ENCODE measurements at regions of chr13 and their contacts with region 1.

Region 1: GRCh38 chr13:48769107-48769704 is 115.5 kb downstream of the CYSLTR2 start:
- DNase-seq: peak; percentile 80
- H3K4me3 Mint-ChIP-seq: no peak overlapping the region
- H3K27ac Mint-ChIP-seq: peak overlapping the region; percentile 16
- H3K4me1 Mint-ChIP-seq: peaks cover 9% of the 10 kb centered on the region
- H3K27me3 Mint-ChIP-seq: no peaks in the 10 kb centered on the region
- CTCF ChIP-seq: peak; percentile 92

Region 2: GRCh38 chr13:48110931-48111721 is 658.1 kb before region 1 on chr13:
- CTCF ChIA-PET with region 1: no interaction called
- intact Hi-C with region 1: no loop called
- DNase-seq: peak; percentile 10
- H3K4me3 Mint-ChIP-seq: no peak overlapping the region
- H3K27ac Mint-ChIP-seq: no peak overlapping the region
- H3K4me1 Mint-ChIP-seq: peaks cover 31% of the 10 kb centered on the region
- H3K27me3 Mint-ChIP-seq: no peaks in the 10 kb centered on the region
- CTCF ChIP-seq: no peak

Region 3: GRCh38 chr13:48126944-48127830 is 642.0 kb before region 1 on chr13:
- CTCF ChIA-PET with region 1: no interaction called
- intact Hi-C with region 1: loop called (anchors 10 kb)
- DNase-seq: peak; percentile 20
- H3K4me3 Mint-ChIP-seq: no peak overlapping the region
- H3K27ac Mint-ChIP-seq: no peak overlapping the region
- H3K4me1 Mint-ChIP-seq: peaks cover 8% of the 10 kb centered on the region
- H3K27me3 Mint-ChIP-seq: no peaks in the 10 kb centered on the region
- CTCF ChIP-seq: peak; percentile 41

Region 4: GRCh38 chr13:48334534-48335127 is 434.6 kb before region 1 on chr13:
- CTCF ChIA-PET with region 1: interaction called, 5 read pairs
- intact Hi-C with region 1: loop called (anchors 1 kb)
- DNase-seq: no peak
- H3K4me3 Mint-ChIP-seq: no peak overlapping the region
- H3K27ac Mint-ChIP-seq: no peak overlapping the region
- H3K4me1 Mint-ChIP-seq: peaks cover 15% of the 10 kb centered on the region
- H3K27me3 Mint-ChIP-seq: no peaks in the 10 kb centered on the region
- CTCF ChIP-seq: no peak

Region 5: GRCh38 chr13:48595431-48596429 is 173.5 kb before region 1 on chr13:
- CTCF ChIA-PET with region 1: interaction called, 7 read pairs
- intact Hi-C with region 1: loop called (anchors 1 kb)
- DNase-seq: peak; percentile 63
- H3K4me3 Mint-ChIP-seq: no peak overlapping the region
- H3K27ac Mint-ChIP-seq: peak overlapping the region; percentile 90
- H3K4me1 Mint-ChIP-seq: peaks cover 62% of the 10 kb centered on the region
- H3K27me3 Mint-ChIP-seq: no peaks in the 10 kb centered on the region
- CTCF ChIP-seq: peak; percentile 46

Region 6: DNA sequence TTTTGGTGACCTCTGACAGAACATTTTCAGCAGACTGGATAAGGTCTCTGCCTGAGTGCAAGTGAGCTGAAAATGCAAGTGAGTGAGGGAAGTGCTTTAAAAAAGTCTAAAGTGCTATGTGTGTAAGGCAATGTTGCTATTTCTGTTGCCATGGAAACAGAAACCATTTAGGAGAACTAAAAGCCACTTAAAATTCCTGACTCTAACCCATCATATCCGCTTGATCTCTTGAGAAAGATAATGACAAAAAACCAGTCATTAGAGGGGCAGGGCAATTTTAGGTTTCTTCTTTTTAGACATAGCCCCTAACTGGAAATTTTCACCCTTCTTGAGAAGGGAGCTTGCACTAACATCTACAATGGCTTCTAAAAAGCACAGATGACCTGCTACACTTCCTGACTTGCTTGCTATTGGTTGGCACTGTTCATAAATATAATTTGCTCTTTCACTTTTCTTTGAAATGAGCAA is 115.7 kb before region 1 on chr13 and contains the start of gene CYSLTR2:
- CTCF ChIA-PET with region 1: no interaction called
- intact Hi-C with region 1: loop called (anchors 5 kb)
- DNase-seq: no peak
- H3K4me3 Mint-ChIP-seq: no peak within 1 kb of the TSS
- H3K27ac Mint-ChIP-seq: no peak within 1 kb of the TSS
- H3K4me1 Mint-ChIP-seq: peaks cover 24% of the 10 kb centered on the region
- H3K27me3 Mint-ChIP-seq: no peaks in the 10 kb centered on the region
- CTCF ChIP-seq: no peak
- total RNA-seq, gene CYSLTR2: not detected in 2 replicates

Region 7: GRCh38 chr13:49395451-49395865 is 626.3 kb after region 1 on chr13:
- CTCF ChIA-PET with region 1: no interaction called
- intact Hi-C with region 1: no loop called
- DNase-seq: no peak
- H3K4me3 Mint-ChIP-seq: no peak overlapping the region
- H3K27ac Mint-ChIP-seq: no peak overlapping the region
- H3K4me1 Mint-ChIP-seq: no peaks in the 10 kb centered on the region
- H3K27me3 Mint-ChIP-seq: no peaks in the 10 kb centered on the region
- CTCF ChIP-seq: no peak